Lower leg skin (tissue), 4 donors: ENCODE measurements at regions of chr12 and their contacts with region 1.

Region 1: GRCh38 chr12:117119592-117120198 is 20.5 kb upstream of the TESC start:
- DNase-seq: no peak
- H3K4me3 ChIP-seq: no peak overlapping the region
- CTCF ChIP-seq: no peak
- POLR2A ChIP-seq: no peak

Region 2: DNA sequence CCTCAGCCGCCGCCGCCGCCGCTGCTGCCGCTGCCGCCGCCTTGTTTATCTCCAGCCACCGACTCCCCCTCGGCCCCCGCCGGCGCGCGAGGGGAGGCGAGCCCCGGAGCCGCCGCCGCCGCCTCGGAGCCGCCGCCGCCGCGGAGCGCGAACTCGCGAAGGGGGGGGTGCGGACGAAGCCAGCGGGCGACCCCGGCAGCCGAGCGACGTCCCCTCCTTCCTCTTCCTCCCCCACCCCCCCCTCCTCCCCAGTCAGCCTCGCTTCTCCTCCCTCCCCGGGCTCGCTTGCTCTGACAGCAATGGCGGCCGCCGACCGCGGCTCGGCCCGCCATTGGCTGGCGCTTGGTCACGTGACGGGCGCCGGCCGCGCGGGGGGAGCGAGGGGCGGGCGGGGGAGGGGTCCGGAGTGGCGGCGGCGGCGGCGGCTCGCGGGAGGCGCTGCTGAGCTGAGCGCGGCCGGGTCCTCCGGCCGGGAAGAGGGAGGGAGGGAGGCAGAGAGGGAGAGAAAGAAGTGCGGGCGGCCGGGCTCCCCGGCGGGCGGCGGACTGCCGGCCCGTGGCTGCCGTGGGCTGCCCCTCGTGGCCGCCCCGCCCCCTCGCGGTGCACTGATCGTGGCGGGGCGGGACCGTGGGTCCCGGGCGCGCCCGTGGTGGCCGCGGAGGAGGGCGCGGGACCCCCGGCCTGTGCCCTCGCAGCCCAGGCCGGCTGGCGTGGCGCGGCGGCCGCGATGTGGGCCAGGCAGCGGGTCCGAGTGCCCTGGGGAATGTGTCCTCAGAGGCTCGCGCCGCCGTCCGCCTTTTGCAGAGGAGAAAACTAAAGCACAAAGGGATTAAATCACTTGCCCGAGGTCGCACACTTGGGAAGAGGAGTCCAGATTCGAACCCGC is 842.1 kb before region 1 on chr12 and contains the start of gene MED13L:
- intact Hi-C with region 1: loop called (anchors 5 kb)
- DNase-seq: peak; percentile 81 to 97
- H3K4me3 ChIP-seq: peak within 1 kb of the TSS; percentile 74
- CTCF ChIP-seq: no peak
- POLR2A ChIP-seq: peak in 1 of 2 donors; percentile 34
- total RNA-seq, gene MED13L: 158 to 247 (median 166) TPM

Region 3: GRCh38 chr12:116635487-116635886 is 484.2 kb before region 1 on chr12:
- intact Hi-C with region 1: no loop called
- DNase-seq: no peak
- H3K4me3 ChIP-seq: no peak overlapping the region
- CTCF ChIP-seq: no peak
- POLR2A ChIP-seq: no peak